ENCODE measurements at regions of chr11 and their contacts with region 1.

Region 1: GRCh38 chr11:72904016-72904415 is 89.8 kb downstream of the ATG16L2 start:
- DNase-seq: no peak
- H3K4me3 ChIP-seq: no peak overlapping the region
- CTCF ChIP-seq: no peak

Region 2: DNA sequence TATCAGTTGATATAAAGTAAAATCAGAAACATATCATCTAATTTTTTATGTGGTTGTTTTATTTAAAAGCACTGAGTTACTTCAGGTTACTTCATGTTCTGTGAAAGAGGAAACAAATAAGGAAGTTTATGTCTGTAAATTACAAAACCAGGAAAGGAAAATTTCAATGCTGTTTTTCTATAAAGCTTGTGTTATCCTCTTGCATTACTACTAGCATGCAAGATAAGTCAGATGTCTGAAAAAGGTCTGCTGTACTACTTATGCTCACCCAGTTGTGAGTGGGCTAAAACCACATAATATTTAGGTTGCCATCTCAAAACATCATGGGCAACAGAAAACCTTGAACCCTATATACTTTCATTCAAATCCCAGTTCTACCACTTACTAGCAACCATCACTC is 31.7 kb after region 1 on chr11:
- in situ Hi-C with region 1: loop called (anchors 5 kb)
- DNase-seq: no peak
- H3K4me3 ChIP-seq: no peak overlapping the region
- CTCF ChIP-seq: no peak

Region 3: DNA sequence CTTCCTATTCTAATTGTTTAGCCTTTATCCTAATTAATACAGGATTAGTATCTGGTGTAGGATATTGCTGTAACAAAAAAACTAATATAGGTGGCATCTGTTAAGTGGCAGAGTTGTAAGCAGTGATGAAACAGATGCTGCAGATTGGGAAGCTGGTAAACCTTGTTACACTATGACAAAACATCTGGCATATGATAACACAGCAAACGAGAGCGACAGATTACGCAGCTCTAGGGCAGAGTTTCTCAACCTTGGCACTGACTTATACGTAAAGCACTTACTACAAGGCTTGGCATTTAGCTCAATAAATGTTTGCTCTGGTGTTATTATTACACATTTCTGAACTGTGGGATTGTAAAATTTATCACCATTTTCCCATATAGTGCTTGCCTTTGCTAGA is 47.2 kb after region 1 on chr11:
- in situ Hi-C with region 1: no loop called
- DNase-seq: no peak
- H3K4me3 ChIP-seq: no peak overlapping the region
- CTCF ChIP-seq: no peak